ENCODE measurements at regions of chr5 and their contacts with region 1.

Region 1: DNA sequence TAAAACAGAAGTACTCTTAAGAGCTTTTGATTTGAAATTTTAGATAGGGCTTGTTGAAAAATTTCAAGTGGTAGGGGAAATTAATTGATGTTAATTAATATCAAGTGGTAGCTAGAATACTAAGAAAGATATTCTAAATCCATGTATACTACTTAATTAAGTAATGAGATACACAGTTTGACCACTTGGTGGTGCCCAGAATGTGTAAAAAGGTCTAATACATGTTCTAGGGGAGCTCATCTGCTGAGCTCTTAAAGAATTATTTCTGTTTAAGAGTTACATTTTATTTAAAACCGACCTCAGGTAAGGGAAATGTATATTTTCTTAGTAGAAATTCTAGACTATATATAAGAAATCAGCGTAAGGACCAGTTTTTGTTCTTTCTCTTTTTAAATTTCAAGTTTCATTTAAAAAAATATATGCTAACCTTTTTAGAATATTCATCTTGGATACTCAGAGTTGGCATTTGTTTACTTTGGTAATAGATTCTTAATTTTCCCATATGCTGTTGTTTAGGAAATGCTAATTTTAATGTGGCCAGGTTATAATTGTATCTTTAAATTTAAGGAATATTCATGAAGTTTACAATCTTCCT is 61.5 kb downstream of the LNPEP start:
- DNase-seq: peak; percentile 30
- ATAC-seq: peak; percentile 63
- H3K4me3 Mint-ChIP-seq: no peak overlapping the region
- H3K27ac Mint-ChIP-seq: no peak overlapping the region
- H3K4me1 Mint-ChIP-seq: peaks cover 19% of the 10 kb centered on the region
- H3K27me3 Mint-ChIP-seq: no peaks in the 10 kb centered on the region

Region 2: DNA sequence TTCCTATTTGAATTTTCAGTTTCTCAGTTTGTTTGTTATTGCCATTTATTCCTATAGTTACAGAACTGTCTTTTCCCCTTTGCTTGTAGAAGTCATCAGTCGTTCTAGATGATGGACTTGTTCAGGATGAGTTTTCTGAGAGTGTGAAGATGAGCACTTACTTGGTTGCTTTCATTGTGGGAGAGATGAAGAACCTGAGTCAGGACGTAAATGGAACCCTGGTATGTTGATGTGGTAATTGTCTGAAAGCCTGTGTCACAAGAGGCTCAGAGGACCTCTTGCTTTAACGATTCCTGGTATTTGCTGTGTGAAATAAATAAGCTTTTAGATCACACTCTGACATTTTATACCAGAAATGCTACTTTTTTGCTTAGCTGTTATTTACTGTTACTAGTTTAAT is 10.9 kb before region 1 on chr5:
- CTCF ChIA-PET with region 1: interaction called, 21 read pairs
- POLR2A ChIA-PET with region 1: no interaction called
- intact Hi-C with region 1: no loop called
- DNase-seq: no peak
- ATAC-seq: peak; percentile 60
- H3K4me3 Mint-ChIP-seq: no peak overlapping the region
- H3K27ac Mint-ChIP-seq: no peak overlapping the region
- H3K4me1 Mint-ChIP-seq: peaks cover 42% of the 10 kb centered on the region
- H3K27me3 Mint-ChIP-seq: no peaks in the 10 kb centered on the region

Region 3: GRCh38 chr5:97010606-97011005 is 13.2 kb after region 1 on chr5:
- CTCF ChIA-PET with region 1: interaction called, 14 read pairs
- POLR2A ChIA-PET with region 1: no interaction called
- intact Hi-C with region 1: no loop called
- DNase-seq: no peak
- ATAC-seq: no peak
- H3K4me3 Mint-ChIP-seq: no peak overlapping the region
- H3K27ac Mint-ChIP-seq: no peak overlapping the region
- H3K4me1 Mint-ChIP-seq: peaks cover 13% of the 10 kb centered on the region
- H3K27me3 Mint-ChIP-seq: no peaks in the 10 kb centered on the region

Region 4: GRCh38 chr5:97101189-97101910 is 104.0 kb after region 1 on chr5:
- CTCF ChIA-PET with region 1: no interaction called
- POLR2A ChIA-PET with region 1: no interaction called
- intact Hi-C with region 1: no loop called
- DNase-seq: no peak
- ATAC-seq: no peak
- H3K4me3 Mint-ChIP-seq: no peak overlapping the region
- H3K27ac Mint-ChIP-seq: no peak overlapping the region
- H3K4me1 Mint-ChIP-seq: no peaks in the 10 kb centered on the region
- H3K27me3 Mint-ChIP-seq: peaks cover 12% of the 10 kb centered on the region

Region 5: GRCh38 chr5:97142521-97143254 is 145.3 kb after region 1 on chr5 and contains the start of gene LIX1:
- CTCF ChIA-PET with region 1: interaction called, 15 read pairs
- POLR2A ChIA-PET with region 1: no interaction called
- intact Hi-C with region 1: loop called (anchors 5 kb)
- DNase-seq: peak; percentile 55
- ATAC-seq: peak; percentile 84
- H3K4me3 Mint-ChIP-seq: no peak within 1 kb of the TSS
- H3K27ac Mint-ChIP-seq: no peak within 1 kb of the TSS
- H3K4me1 Mint-ChIP-seq: no peaks in the 10 kb centered on the region
- H3K27me3 Mint-ChIP-seq: peaks cover 3% of the 10 kb centered on the region
- total RNA-seq, gene LIX1: not detected

Measured in activated CD4-positive, alpha-beta T cell treated with anti-CD3 and anti-CD28 coated beads for 36 hours (primary cell).